Caco-2 (cell line): ENCODE measurements at regions of chr15 and their contacts with region 1.

Region 1: GRCh38 chr15:96330450-96331145 is at the start of gene NR2F2:
- DNase-seq: peak; percentile 96 to 97
- H3K4me3 ChIP-seq: peak within 1 kb of the TSS; percentile 84
- H3K4me3 Mint-ChIP-seq: peak within 1 kb of the TSS; percentile 83
- H3K27ac Mint-ChIP-seq: peak within 1 kb of the TSS; percentile 84
- H3K4me1 ChIP-seq: peaks cover 21% of the 10 kb centered on the region
- H3K4me1 Mint-ChIP-seq: peaks cover 19% of the 10 kb centered on the region
- H3K27me3 ChIP-seq: no peaks in the 10 kb centered on the region
- H3K27me3 Mint-ChIP-seq: no peaks in the 10 kb centered on the region
- CTCF ChIP-seq: no peak
- total RNA-seq, gene NR2F2: 134 and 140 TPM in 2 replicates

Region 2: GRCh38 chr15:95922431-95922830 is 408.2 kb before region 1 on chr15:
- CTCF ChIA-PET with region 1: interaction called, 3 read pairs
- POLR2A ChIA-PET with region 1: no interaction called
- intact Hi-C with region 1: loop called (anchors 2 kb)
- DNase-seq: peak; percentile 52 to 57
- H3K4me3 ChIP-seq: no peak overlapping the region
- H3K4me3 Mint-ChIP-seq: no peak overlapping the region
- H3K27ac Mint-ChIP-seq: no peak overlapping the region
- H3K4me1 ChIP-seq: no peaks in the 10 kb centered on the region
- H3K4me1 Mint-ChIP-seq: peaks cover 7% of the 10 kb centered on the region
- H3K27me3 ChIP-seq: no peaks in the 10 kb centered on the region
- H3K27me3 Mint-ChIP-seq: no peaks in the 10 kb centered on the region
- CTCF ChIP-seq: peak in 1 of 2 experiments; percentile 33

Region 3: DNA sequence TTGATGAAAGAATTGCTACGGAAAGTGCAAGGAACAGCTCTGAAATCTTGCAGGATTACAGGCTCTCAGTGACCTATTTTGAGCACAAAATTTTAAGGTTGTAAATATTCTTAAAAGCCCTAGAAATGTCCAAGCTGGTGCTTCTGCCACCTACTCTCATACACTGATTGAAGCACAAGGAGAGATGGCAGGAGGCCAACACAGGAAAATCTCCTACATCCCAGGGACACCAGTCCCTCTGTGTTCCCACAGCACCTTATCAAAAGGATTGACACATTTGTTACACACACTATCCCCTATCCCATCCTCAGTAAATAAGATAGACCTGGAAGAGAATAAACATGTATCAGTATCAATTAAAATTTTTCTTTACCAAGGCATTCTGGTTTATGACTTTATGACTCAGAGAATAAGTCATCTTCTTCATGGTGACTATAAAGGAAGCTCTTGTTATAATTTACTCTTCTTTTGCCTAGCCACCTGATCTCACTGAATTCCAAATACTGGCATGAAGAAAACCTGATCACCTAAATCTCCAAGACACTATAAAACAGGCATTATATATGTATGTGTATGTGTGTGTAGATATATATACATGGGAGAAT is 208.4 kb before region 1 on chr15:
- CTCF ChIA-PET with region 1: interaction called, 5 read pairs
- POLR2A ChIA-PET with region 1: interaction called, 6 read pairs
- intact Hi-C with region 1: loop called (anchors 1 kb)
- DNase-seq: no peak
- H3K4me3 ChIP-seq: no peak overlapping the region
- H3K4me3 Mint-ChIP-seq: peak overlapping the region; percentile 23
- H3K27ac Mint-ChIP-seq: peak overlapping the region; percentile 66
- H3K4me1 ChIP-seq: peaks cover 49% of the 10 kb centered on the region
- H3K4me1 Mint-ChIP-seq: peaks cover 54% of the 10 kb centered on the region
- H3K27me3 ChIP-seq: no peaks in the 10 kb centered on the region
- H3K27me3 Mint-ChIP-seq: no peaks in the 10 kb centered on the region
- CTCF ChIP-seq: no peak

Region 4: DNA sequence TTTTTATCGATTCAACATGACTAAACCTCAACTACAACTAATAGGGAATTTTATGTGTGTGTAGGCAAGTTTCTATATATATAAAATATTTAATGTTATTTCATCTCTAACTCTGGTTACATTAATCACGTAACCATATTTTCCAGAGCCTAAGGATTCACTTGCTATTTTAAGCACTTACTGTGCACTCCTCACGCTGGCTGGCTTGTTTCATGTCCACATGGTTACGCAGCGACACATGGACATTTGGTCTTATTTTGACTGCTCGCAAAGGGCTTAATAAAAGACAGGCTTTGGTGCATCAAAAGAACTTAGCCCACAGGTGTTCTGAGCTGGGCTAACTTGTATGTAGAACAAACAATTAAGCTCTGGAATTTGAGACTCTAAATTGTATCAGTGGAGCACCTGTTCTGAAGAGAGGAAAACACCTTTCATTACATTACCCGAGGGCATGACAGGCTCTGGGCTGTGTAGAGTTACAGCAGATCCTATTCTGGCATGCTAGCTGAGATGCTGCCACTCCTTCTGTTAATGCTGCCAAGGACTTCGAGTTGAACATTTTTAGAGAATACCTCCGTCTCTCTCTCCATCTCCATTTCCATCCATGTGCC is 130.1 kb before region 1 on chr15:
- CTCF ChIA-PET with region 1: interaction called, 3 read pairs
- POLR2A ChIA-PET with region 1: interaction called, 9 read pairs
- intact Hi-C with region 1: loop called (anchors 2 kb)
- DNase-seq: peak; percentile 68 to 76
- H3K4me3 ChIP-seq: no peak overlapping the region
- H3K4me3 Mint-ChIP-seq: peak overlapping the region; percentile 24
- H3K27ac Mint-ChIP-seq: peak overlapping the region; percentile 72
- H3K4me1 ChIP-seq: peaks cover 44% of the 10 kb centered on the region
- H3K4me1 Mint-ChIP-seq: peaks cover 29% of the 10 kb centered on the region
- H3K27me3 ChIP-seq: no peaks in the 10 kb centered on the region
- H3K27me3 Mint-ChIP-seq: no peaks in the 10 kb centered on the region
- CTCF ChIP-seq: no peak

Region 5: GRCh38 chr15:96264801-96265515 is 65.6 kb before region 1 on chr15:
- CTCF ChIA-PET with region 1: interaction called, 5 read pairs
- POLR2A ChIA-PET with region 1: interaction called, 13 read pairs
- intact Hi-C with region 1: loop called (anchors 1 kb)
- DNase-seq: peak; percentile 84 to 91
- H3K4me3 ChIP-seq: no peak overlapping the region
- H3K4me3 Mint-ChIP-seq: peak overlapping the region; percentile 68
- H3K27ac Mint-ChIP-seq: peak overlapping the region; percentile 98
- H3K4me1 ChIP-seq: peaks cover 78% of the 10 kb centered on the region
- H3K4me1 Mint-ChIP-seq: peaks cover 50% of the 10 kb centered on the region
- H3K27me3 ChIP-seq: no peaks in the 10 kb centered on the region
- H3K27me3 Mint-ChIP-seq: no peaks in the 10 kb centered on the region
- CTCF ChIP-seq: no peak

Region 6: DNA sequence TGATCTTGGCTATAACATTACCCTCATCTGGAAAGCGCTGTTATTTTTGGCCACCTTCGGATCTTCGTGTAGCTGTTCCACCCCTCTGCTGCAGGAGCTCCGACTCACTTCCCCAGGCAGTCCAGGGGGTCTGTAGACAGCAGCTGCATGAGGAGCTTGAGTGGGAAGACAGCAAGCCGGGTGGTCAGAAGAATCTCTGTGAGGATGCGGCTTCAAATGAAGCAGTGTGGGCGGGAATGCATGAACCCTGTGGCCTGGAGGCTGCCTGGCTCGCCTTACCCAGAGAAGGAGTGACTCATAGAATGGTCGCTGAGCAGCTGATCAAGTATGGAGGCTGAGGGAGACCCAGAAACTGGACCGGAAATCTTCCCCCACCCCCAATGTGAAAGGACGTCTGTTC is 45.3 kb before region 1 on chr15:
- CTCF ChIA-PET with region 1: no interaction called
- POLR2A ChIA-PET with region 1: no interaction called
- intact Hi-C with region 1: no loop called
- DNase-seq: no peak
- H3K4me3 ChIP-seq: no peak overlapping the region
- H3K4me3 Mint-ChIP-seq: no peak overlapping the region
- H3K27ac Mint-ChIP-seq: no peak overlapping the region
- H3K4me1 ChIP-seq: 0 out of 2 replicates have a peak, but pooled peaks cover 4% of the 10 kb centered on the region
- H3K4me1 Mint-ChIP-seq: peaks cover 7% of the 10 kb centered on the region
- H3K27me3 ChIP-seq: no peaks in the 10 kb centered on the region
- H3K27me3 Mint-ChIP-seq: no peaks in the 10 kb centered on the region
- CTCF ChIP-seq: no peak

Region 7: GRCh38 chr15:96645796-96646195 is 315.2 kb after region 1 on chr15:
- CTCF ChIA-PET with region 1: no interaction called
- POLR2A ChIA-PET with region 1: no interaction called
- intact Hi-C with region 1: no loop called
- DNase-seq: no peak
- H3K4me3 ChIP-seq: no peak overlapping the region
- H3K4me3 Mint-ChIP-seq: no peak overlapping the region
- H3K27ac Mint-ChIP-seq: no peak overlapping the region
- H3K4me1 ChIP-seq: no peaks in the 10 kb centered on the region
- H3K4me1 Mint-ChIP-seq: no peaks in the 10 kb centered on the region
- H3K27me3 ChIP-seq: no peaks in the 10 kb centered on the region; the same call in 1 of the 2 replicates
- H3K27me3 Mint-ChIP-seq: peaks cover 6% of the 10 kb centered on the region
- CTCF ChIP-seq: no peak